Common myeloid progenitor, CD34-positive (primary cell): ENCODE measurements at regions of chr9 and their contacts with region 1.

Region 1: DNA sequence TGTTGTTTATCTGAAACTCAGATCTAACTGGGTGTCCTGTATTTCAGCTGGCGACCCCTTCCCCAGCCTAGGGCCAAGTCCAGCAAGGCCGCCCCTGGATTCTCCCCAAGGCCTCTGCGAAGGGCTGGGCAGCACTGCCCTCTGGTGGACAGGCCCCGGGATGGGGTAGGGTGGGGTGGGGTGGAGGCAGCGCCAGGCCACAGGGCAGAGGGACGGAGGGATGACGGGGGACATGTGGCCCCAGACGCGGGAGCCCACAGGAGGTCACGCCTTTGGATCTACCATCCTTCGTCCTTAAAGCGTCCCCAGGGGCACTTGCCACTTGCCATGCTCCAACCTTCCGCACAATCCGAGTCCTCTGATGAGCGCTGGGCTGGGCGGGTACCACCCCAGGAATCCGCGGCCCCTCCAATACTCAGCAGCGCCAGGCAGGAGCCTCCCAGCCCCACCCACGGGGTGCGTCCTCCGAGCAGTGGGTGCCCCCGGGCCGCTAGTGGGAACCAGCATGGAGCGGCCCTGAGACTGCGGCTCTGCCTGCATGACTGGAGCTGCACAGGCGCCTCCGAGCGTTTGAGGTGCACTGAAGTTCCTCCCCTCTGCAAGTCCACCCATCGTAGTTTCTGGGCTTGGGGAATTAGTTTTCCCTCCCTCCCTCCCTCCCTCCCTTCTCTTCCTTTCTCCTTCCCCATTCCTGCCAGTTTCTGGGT is 7.1 kb upstream of the AGPAT2 start:
- DNase-seq: peak in 2 of 3 donors; percentile 57 to 64
- H3K4me3 ChIP-seq: no peak overlapping the region
- H3K27ac ChIP-seq: no peak overlapping the region
- H3K4me1 ChIP-seq: peaks cover 0 to 42% (median 24%) of the 10 kb centered on the region in 4 experiments
- H3K27me3 ChIP-seq: no peaks in the 10 kb centered on the region

Region 2: DNA sequence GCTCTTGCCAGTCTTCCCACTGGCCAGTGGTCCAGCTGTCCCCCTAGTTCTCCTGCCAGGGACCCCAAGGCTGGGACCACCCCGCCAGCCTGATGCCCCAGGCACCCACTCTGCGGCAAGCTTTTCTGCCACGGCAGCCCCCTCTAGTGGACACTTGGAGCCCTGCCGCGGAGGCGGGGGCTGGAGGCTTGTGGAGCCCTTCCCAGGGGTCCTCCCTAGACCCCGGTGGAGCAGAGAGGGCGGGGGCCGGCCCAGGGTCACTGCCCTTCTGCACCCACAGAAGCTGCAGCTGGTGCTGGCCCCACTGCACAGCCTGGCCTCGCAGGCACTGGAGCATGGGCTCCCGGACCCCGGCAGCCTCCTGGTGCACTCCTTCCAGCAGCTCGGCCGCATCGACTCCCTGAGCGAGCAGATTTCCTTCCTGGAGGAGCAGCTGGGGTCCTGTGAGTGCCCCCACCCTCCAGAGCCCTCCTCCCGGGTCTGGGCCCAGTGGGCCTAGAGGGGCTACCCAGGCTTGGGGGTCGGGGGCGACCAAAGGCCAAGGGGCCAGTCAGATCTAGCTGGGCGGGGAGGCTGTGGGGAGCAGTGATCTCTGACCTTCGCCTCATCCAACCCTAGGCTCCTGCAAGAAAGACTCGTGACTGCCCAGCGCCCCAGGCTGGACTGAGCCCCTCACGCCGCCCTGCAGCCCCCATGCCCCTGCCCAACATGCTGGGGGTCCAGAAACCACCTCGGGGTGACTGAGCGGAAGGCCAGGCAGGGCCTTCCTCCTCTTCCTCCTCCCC is 22.6 kb before region 1 on chr9:
- CTCF ChIA-PET with region 1: interaction called, 19 read pairs
- POLR2A ChIA-PET with region 1: interaction called, 6 read pairs
- DNase-seq: peak in 2 of 3 donors; percentile 60 to 65
- H3K4me3 ChIP-seq: no peak overlapping the region
- H3K27ac ChIP-seq: no peak overlapping the region
- H3K4me1 ChIP-seq: peaks cover 0 to 59% (median 44%) of the 10 kb centered on the region in 4 experiments
- H3K27me3 ChIP-seq: no peaks in the 10 kb centered on the region

Region 3: GRCh38 chr9:136679431-136679941 is 14.9 kb before region 1 on chr9:
- CTCF ChIA-PET with region 1: interaction called, 19 read pairs
- POLR2A ChIA-PET with region 1: interaction called, 3 read pairs
- DNase-seq: peak; percentile 54 to 88 (median 86)
- H3K4me3 ChIP-seq: peak overlapping the region in 3 of 7 experiments; percentile 24 to 26 (median 24)
- H3K27ac ChIP-seq: peak overlapping the region in 1 of 2 experiments; percentile 49
- H3K4me1 ChIP-seq: peaks cover 0 to 39% (median 32%) of the 10 kb centered on the region in 4 experiments
- H3K27me3 ChIP-seq: no peaks in the 10 kb centered on the region

Region 4: GRCh38 chr9:136721339-136722092 is 27.1 kb after region 1 on chr9:
- CTCF ChIA-PET with region 1: interaction called, 14 read pairs
- POLR2A ChIA-PET with region 1: interaction called, 4 read pairs
- DNase-seq: no peak
- H3K4me3 ChIP-seq: no peak overlapping the region
- H3K27ac ChIP-seq: no peak overlapping the region
- H3K4me1 ChIP-seq: peaks cover 0 to 62% (median 53%) of the 10 kb centered on the region in 4 experiments
- H3K27me3 ChIP-seq: no peaks in the 10 kb centered on the region

Region 5: GRCh38 chr9:136735812-136736480 is 41.6 kb after region 1 on chr9:
- CTCF ChIA-PET with region 1: no interaction called
- POLR2A ChIA-PET with region 1: no interaction called
- DNase-seq: no peak
- H3K4me3 ChIP-seq: no peak overlapping the region
- H3K27ac ChIP-seq: no peak overlapping the region
- H3K4me1 ChIP-seq: peaks cover 0 to 4% (median 3%) of the 10 kb centered on the region in 4 experiments
- H3K27me3 ChIP-seq: no peaks in the 10 kb centered on the region

Region 6: DNA sequence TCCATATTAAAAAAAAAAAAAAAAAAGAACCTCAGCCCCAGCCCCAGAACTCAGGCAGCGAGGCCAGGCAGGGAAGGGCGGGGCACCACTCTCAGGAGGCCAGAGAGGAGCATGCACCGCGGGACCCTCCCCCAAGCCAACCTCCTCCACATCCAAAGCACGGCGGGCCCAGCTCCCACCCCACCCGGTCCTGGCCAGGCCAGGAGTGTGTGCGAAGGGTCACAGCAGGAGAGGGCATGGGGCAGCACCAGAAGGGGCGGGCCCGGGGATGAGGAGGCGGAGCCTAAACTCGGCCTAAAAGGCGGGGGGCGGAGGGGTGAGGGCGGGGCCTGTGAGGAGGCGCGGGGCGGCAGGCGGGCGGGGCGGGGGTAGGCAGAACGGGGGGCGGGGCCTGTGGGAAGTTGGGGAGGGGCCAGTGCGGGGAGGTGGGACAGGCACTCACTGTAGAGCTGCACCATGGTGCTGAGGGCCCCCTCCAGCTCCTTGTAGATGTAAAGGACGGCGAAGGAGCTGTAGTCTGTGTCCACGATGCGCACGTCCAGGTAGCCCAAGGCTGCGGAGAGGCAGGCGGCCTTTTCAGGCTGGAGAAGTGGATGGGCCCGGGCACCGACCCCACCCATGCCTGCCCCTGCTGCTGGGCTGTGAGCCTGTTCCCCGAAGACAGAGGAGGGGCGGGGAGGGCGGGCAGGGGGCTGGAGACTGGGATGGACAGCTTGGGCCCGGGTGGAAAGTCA is 68.7 kb after region 1 on chr9:
- CTCF ChIA-PET with region 1: no interaction called
- POLR2A ChIA-PET with region 1: no interaction called
- DNase-seq: peak; percentile 75 to 84 (median 83)
- H3K4me3 ChIP-seq: peak overlapping the region in 2 of 7 experiments; percentile 19 to 28
- H3K27ac ChIP-seq: no peak overlapping the region
- H3K4me1 ChIP-seq: peaks cover 0 to 8% (median 5%) of the 10 kb centered on the region in 4 experiments
- H3K27me3 ChIP-seq: no peaks in the 10 kb centered on the region